ENCODE measurements at regions of chrX and their contacts with region 1.

Region 1: GRCh38 chrX:11375614-11376119 is 82.5 kb downstream of the AMELX start:
- DNase-seq: no peak
- ATAC-seq: no peak
- H3K4me3 ChIP-seq: no peak overlapping the region
- H3K27ac ChIP-seq: peak overlapping the region; percentile 77
- H3K4me1 ChIP-seq: peaks cover 38% of the 10 kb centered on the region
- H3K27me3 ChIP-seq: no peaks in the 10 kb centered on the region
- CTCF ChIP-seq: no peak

Region 2: GRCh38 chrX:11188664-11189063 is 187.0 kb before region 1 on chrX:
- CTCF ChIA-PET with region 1: no interaction called
- POLR2A ChIA-PET with region 1: no interaction called
- intact Hi-C with region 1: loop called (anchors 10 kb)
- DNase-seq: peak; percentile 85
- ATAC-seq: peak; percentile 92
- H3K4me3 ChIP-seq: no peak overlapping the region
- H3K27ac ChIP-seq: peak overlapping the region; percentile 38
- H3K4me1 ChIP-seq: peaks cover 45% of the 10 kb centered on the region
- H3K27me3 ChIP-seq: no peaks in the 10 kb centered on the region
- CTCF ChIP-seq: no peak

Region 3: GRCh38 chrX:11423362-11423818 is 47.7 kb after region 1 on chrX:
- CTCF ChIA-PET with region 1: no interaction called
- POLR2A ChIA-PET with region 1: interaction called, 3 read pairs
- intact Hi-C with region 1: loop called (anchors 1 kb)
- DNase-seq: peak; percentile 51
- ATAC-seq: no peak
- H3K4me3 ChIP-seq: no peak overlapping the region
- H3K27ac ChIP-seq: no peak overlapping the region
- H3K4me1 ChIP-seq: peaks cover 23% of the 10 kb centered on the region
- H3K27me3 ChIP-seq: no peaks in the 10 kb centered on the region
- CTCF ChIP-seq: no peak

Region 4: DNA sequence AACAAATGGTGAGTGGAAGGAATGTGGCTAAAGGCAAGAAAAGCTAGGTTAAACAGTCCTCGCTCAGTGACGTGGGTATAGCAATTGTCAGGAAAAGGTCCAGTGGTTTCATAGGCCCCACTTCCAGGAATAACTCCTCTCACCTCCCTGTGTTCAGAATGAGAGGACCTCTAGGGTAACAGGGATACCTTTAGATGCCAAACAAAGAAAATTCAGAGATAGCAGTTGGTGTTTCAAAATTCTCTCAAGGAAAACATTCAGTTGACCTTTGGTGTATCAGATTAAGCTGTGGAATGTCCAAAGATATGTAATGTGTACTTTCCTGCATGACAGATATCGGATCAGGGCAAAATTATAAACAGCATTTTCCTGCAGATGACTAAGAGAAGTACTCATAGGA is 134.1 kb after region 1 on chrX:
- CTCF ChIA-PET with region 1: no interaction called
- POLR2A ChIA-PET with region 1: no interaction called
- intact Hi-C with region 1: no loop called
- DNase-seq: peak; percentile 43
- ATAC-seq: peak; percentile 29; the same call in 1 of the 2 replicates
- H3K4me3 ChIP-seq: no peak overlapping the region
- H3K27ac ChIP-seq: no peak overlapping the region
- H3K4me1 ChIP-seq: peaks cover 9% of the 10 kb centered on the region
- H3K27me3 ChIP-seq: no peaks in the 10 kb centered on the region
- CTCF ChIP-seq: no peak

Measured in PC-3 (cell line).